ENCODE measurements at regions of chr14 and their contacts with region 1.

Region 1: DNA sequence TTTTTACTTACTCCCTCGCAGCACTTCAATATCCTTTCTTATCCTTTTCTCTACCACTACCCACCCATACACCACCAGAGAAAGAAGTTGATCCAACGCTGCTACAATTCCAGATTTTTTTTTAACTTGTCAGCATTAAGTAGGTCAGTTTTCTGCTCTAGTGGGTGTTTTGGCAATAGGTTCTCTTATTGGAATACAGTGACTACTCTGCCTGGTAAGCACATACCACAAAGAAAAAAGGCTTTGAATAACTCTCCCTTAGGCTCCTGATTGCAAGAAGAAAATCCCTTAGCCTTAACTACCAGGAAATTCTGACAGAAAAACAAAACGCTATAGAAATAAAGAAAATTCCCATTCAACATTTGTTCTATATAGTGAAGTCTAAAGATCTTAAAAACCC is 72.0 kb downstream of the NUMB start:
- DNase-seq: no peak
- ATAC-seq: no peak
- H3K4me3 ChIP-seq: no peak overlapping the region
- H3K4me3 Mint-ChIP-seq: no peak overlapping the region
- H3K27ac ChIP-seq: no peak overlapping the region
- H3K27ac Mint-ChIP-seq: no peak overlapping the region
- H3K4me1 ChIP-seq: peaks cover 9 to 25% of the 10 kb centered on the region in 2 donors
- H3K4me1 Mint-ChIP-seq: peaks cover 41% of the 10 kb centered on the region
- H3K27me3 ChIP-seq: no peaks in the 10 kb centered on the region
- H3K27me3 Mint-ChIP-seq: no peaks in the 10 kb centered on the region
- CTCF ChIP-seq: no peak

Region 2: DNA sequence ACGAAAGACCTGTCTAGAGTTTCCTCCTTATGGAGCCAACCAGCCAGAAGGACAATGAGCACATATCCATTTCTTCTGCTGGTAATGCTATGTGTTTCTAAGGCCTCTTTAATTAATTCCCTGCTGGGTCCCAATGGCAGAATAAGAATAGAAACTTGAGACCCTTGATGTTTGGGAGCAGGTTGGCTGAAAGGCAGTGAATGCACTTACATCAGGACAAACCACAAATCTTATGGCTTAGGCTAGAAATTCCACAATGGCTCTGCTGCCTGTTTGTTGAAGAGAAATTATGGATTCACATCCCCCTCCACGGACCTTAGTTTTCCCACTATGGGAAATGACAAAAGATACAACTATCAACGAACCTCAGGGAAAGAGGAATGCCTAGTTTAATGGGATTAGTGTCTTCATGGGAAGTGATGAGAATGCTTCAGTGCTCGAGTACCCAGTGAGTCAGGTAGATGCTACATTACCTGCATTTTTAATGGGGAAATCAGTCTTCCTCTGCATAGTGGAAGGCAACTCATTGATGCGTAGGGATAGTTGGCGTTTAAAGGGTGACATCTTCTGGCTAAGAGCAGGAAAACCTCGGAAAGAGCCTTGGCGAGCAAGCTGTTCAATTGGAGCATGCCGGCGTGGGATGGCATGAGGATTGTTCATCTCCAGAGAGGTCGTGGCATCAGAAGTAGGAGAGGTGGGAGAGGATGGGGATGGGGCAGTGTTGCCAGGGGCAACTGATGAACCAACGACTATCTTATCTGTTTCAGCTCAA is 102.5 kb before region 1 on chr14:
- CTCF ChIA-PET with region 1: no interaction called
- POLR2A ChIA-PET with region 1: interaction called, 10 read pairs
- intact Hi-C with region 1: no loop called
- DNase-seq: no peak
- ATAC-seq: no peak
- H3K4me3 ChIP-seq: no peak overlapping the region
- H3K4me3 Mint-ChIP-seq: no peak overlapping the region
- H3K27ac ChIP-seq: no peak overlapping the region
- H3K27ac Mint-ChIP-seq: no peak overlapping the region
- H3K4me1 ChIP-seq: no peaks in the 10 kb centered on the region
- H3K4me1 Mint-ChIP-seq: no peaks in the 10 kb centered on the region
- H3K27me3 ChIP-seq: no peaks in the 10 kb centered on the region
- H3K27me3 Mint-ChIP-seq: no peaks in the 10 kb centered on the region
- CTCF ChIP-seq: no peak

Region 3: DNA sequence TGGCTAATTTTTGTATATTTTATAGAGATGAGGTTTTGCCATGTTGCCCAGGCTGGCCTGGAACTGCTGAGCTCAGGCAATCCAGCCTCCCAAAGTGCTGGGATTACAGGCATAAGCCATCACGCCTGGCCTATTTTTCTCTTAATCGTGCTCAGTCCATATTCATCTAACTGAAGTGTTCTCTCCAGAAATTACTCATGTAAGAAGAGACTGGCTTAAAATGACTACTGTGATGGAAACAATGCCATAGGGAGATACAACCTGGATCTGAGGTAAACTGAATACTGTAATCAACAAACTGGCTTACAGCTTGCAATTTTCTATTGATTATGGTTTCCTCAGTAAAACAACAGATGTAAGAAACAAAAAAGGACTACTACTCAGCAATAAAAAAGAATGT is 50.9 kb after region 1 on chr14:
- CTCF ChIA-PET with region 1: no interaction called
- POLR2A ChIA-PET with region 1: interaction called, 10 read pairs
- intact Hi-C with region 1: no loop called
- DNase-seq: no peak
- ATAC-seq: no peak
- H3K4me3 ChIP-seq: no peak overlapping the region
- H3K4me3 Mint-ChIP-seq: no peak overlapping the region
- H3K27ac ChIP-seq: no peak overlapping the region
- H3K27ac Mint-ChIP-seq: no peak overlapping the region
- H3K4me1 ChIP-seq: peaks cover 0 to 4% of the 10 kb centered on the region in 2 donors
- H3K4me1 Mint-ChIP-seq: peaks cover 34% of the 10 kb centered on the region
- H3K27me3 ChIP-seq: no peaks in the 10 kb centered on the region
- H3K27me3 Mint-ChIP-seq: no peaks in the 10 kb centered on the region
- CTCF ChIP-seq: no peak